Dendritic cell treated with granulocyte-macrophage colony-stimulating factor and Interleukin-4, amounts not matched to agents 40 ng/mL and 50 ng/mL, for 4 days (primary cell): ENCODE measurements at regions of chr4 and their contacts with region 1.

Region 1: DNA sequence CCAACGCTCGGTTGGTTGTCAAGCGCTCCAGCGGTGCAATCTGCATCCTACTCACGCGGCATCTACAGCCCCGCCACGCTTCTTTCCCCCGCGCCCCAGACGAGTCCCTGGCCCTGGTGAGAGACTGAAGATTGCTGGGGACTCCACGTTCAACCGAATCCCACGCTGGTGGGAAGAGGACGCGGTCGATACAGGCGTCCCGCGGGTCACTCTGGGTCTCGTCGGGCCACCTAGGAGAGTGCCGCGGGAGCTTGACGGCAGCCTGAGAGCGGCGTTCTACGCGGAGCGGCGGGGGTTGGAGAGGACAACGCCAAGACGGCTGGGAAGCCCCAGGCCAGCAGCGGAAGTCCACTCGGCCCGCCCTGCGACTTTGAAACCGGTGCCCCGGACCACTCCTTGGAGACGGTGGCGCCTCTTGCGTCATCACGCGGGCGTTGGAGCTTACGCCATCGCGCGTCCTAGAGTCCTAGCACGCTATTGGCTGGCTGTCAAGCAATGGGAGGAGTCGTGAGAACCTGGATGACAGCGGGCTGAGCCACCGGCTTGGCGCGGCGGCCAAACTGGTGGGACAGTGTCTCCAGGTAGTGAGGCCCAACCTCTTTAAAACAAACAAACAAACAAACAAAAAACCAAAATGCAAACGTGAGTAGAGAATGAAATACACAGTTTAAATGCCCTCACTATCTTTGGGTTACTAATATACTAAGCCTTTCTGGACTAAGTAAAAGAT is at the start of gene SCLT1:
- H3K4me3 Mint-ChIP-seq: no peak within 1 kb of the TSS
- H3K27ac Mint-ChIP-seq: no peak within 1 kb of the TSS
- H3K4me1 Mint-ChIP-seq: peaks cover 41% of the 10 kb centered on the region
- H3K27me3 Mint-ChIP-seq: no peaks in the 10 kb centered on the region

Region 2: DNA sequence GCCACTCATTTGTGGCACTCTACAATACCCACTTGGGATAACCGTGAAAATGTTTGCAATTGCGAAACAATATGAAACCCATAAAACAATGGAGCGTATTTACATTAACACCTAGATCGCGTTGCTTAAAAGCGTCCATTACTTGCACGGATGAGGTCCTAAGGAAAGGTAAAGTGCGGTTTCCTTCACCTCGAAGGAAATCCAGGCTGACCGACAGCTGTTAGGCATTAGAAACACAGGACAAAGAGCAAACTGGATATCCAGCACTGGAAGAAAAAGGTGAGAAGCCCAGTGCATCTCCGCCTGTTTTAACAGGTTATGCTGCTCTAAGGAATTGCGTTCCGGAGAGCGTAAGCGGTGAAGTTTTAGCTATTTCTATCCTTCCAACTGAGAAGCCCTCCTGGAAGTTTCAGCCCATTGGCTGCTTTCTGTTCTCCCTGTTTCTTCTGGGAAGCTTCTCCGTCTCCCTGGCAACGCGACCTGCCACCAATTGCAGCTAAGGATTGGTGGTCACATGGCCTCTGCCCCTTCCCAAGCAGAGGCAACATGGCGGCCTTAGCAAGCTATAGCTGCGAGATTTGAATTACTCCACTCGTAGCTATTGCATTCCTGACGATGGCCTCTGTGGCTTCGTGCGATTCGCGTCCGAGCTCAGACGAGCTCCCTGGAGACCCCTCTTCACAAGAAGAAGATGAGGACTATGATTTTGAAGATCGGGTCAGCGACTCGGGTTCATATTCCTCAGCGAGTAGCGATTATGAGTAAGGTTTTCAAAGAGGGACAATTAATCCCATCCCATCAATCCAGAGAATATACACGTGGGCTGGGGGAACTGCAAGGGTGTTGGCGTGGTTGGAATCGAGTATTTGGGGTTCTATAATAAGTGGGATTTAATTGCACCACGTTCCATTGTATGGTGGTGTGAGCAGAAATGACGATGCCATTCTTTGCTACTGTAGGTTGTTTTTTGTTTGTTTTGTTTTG is 1460.6 kb before region 1 on chr4 and contains the start of gene INTU:
- intact Hi-C with region 1: loop called (anchors 10 kb)
- H3K4me3 Mint-ChIP-seq: peak within 1 kb of the TSS; percentile 93
- H3K27ac Mint-ChIP-seq: peak within 1 kb of the TSS; percentile 86
- H3K4me1 Mint-ChIP-seq: peaks cover 17% of the 10 kb centered on the region
- H3K27me3 Mint-ChIP-seq: peaks cover 2% of the 10 kb centered on the region

Region 3: GRCh38 chr4:128287871-128288688 is 805.3 kb before region 1 on chr4:
- intact Hi-C with region 1: loop called (anchors 2 kb)
- H3K4me3 Mint-ChIP-seq: peak overlapping the region; percentile 95
- H3K27ac Mint-ChIP-seq: peak overlapping the region; percentile 92
- H3K4me1 Mint-ChIP-seq: peaks cover 35% of the 10 kb centered on the region
- H3K27me3 Mint-ChIP-seq: peaks cover 2% of the 10 kb centered on the region

Region 4: DNA sequence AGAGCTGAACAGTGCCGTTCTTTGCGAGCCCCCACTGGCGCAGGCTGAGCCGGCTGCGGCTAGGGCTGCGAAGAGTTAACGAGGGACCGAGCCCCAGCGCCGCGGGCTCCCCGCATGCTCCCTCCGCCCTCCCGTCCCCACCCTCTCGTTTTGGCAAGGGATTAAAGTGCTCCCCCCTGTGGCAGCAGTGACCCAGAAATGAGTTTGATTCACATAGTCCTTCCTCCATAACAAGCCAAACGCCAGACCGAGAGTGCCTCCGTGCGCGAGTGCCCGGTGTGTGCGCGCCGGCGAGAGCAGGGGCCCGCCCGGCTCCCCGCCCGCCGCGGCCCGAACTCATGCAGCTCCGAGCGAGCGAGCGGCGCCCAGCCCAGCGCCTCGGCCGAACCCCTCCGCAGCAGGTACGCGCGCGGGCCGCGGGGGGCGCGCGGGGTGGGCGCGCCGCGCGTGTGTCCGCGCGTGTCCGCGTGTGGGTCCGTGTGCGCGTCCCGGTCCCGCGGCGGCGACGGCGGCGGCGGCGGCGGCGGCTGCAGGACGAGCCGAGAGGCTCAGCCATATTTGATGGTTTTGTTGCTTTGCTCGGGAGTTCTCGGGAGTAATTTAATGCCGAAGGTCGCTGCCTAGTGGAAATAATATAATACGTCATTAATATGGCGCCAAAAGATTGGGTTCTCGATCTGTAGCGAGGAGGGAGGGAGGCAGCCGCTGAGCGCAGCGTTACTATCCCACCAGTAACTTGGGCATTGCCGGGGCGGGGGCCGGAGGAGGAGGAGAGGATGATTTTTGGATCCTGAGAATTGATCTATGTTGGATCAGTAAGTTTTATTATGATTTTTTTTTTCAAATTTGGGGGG is 283.7 kb before region 1 on chr4 and contains the start of gene JADE1:
- intact Hi-C with region 1: loop called (anchors 2 kb)
- H3K4me3 Mint-ChIP-seq: peak within 1 kb of the TSS; percentile 89
- H3K27ac Mint-ChIP-seq: peak within 1 kb of the TSS; percentile 92
- H3K4me1 Mint-ChIP-seq: peaks cover 9% of the 10 kb centered on the region
- H3K27me3 Mint-ChIP-seq: peaks cover 3% of the 10 kb centered on the region

Region 5: GRCh38 chr4:129232589-129233324 is 139.4 kb after region 1 on chr4:
- intact Hi-C with region 1: no loop called
- H3K4me3 Mint-ChIP-seq: no peak overlapping the region
- H3K27ac Mint-ChIP-seq: no peak overlapping the region
- H3K4me1 Mint-ChIP-seq: no peaks in the 10 kb centered on the region
- H3K27me3 Mint-ChIP-seq: peaks cover 10% of the 10 kb centered on the region

Region 6: DNA sequence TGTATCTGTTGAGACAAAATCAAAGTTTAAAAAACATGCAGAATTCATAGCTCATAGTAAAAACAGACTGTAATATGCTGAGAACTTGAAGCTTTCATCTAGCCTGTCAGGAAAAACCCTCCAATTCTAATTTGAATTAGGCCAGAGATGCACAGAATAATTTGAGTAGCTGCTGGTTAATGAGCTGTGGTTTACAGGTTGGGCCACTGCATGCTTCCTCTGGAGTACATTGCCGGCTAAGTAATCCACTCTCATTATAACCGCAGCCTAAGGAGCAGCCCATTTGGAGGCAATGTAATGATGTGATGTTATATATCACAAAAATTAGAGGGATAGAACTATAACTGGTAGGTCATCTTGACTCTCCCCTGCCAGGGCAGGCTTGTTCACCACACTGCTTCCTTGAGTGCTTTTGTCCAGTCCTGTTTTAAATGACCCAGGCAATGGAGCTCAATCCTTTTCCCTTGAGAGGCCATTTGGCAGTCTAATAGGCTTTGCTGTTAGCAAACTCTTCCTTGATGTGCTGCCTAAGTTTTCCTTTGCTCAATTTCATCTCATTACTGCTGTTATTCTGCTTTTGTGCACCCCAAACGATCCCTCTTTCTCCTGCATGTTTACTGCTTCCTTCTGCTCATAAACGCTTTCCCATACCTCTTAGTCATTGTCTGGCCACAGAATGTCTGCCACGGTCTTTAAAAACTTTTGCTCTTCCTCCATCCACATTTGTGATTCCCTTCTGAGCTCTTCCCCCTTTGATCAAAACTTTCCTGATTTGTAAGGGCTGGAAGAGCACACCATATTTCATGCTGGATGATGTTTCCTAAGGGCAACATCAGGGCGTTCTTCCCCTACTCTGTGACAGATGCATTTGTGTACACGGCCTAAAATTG is 233.5 kb after region 1 on chr4:
- intact Hi-C with region 1: loop called (anchors 5 kb)
- H3K4me3 Mint-ChIP-seq: no peak overlapping the region
- H3K27ac Mint-ChIP-seq: peak overlapping the region; percentile 72
- H3K4me1 Mint-ChIP-seq: peaks cover 35% of the 10 kb centered on the region
- H3K27me3 Mint-ChIP-seq: peaks cover 2% of the 10 kb centered on the region

Region 7: DNA sequence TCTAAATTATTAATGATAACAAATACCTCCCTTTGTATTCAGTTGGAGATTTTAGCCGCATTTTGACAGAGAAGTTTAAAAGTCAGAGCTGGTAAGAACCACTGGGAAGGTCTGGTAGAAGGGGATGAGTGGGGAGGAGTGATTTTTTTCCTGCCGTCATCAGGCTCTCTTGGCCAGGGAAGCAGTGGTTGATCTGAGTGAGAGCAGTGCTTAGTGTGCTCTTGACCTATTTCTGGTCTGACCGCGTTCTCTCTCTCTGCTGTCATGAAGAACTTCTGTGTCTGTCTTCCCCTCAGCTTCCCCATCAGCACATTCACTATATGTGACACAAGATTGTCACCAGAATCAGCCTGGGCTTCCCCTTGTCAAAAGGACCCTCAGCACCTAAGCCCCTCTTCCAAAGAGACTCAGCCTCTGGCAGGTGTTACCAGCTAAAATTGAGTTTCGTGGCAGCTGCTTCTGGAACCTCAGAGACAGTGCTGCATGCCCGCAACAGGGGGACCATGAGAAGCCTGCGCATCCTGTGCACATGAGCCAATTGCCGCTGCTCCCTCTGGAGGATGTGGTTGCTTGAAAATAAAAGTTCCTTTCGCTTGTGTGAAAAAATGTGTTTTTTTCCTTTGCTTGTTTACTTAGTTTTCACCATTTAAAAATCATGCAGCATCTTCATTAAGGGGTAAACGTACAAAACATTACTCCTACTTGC is 271.5 kb after region 1 on chr4:
- intact Hi-C with region 1: no loop called
- H3K4me3 Mint-ChIP-seq: no peak overlapping the region
- H3K27ac Mint-ChIP-seq: no peak overlapping the region
- H3K4me1 Mint-ChIP-seq: no peaks in the 10 kb centered on the region
- H3K27me3 Mint-ChIP-seq: peaks cover 6% of the 10 kb centered on the region